Activated CD4-positive, alpha-beta memory T cell treated with anti-CD3 and anti-CD28 coated beads for 36 hours (primary cell): ENCODE measurements at regions of chr14 and their contacts with region 1.

Region 1: DNA sequence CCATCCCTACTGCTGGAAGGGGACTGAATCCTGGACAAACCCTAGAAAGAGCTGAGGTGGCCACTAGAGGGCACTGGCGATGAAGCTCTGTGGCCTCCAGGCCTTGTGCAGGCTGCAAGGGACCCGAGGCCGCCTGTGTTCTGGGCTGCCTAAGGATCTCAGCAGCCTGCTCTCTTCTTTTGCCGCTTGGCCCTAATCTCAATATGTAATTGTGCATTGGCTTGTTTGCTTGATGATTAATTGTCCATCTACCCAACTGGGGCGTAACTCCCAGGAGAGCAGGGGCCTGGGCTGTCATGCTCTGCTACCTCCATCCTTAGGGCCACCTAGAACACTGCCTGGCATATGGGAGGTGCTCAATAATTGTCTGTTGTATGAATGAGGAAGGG is 73.8 kb downstream of the SYNE3 start:
- DNase-seq: peak; percentile 83
- H3K4me3 Mint-ChIP-seq: no peak overlapping the region
- H3K27ac Mint-ChIP-seq: peak overlapping the region; percentile 35
- H3K4me1 Mint-ChIP-seq: peaks cover 10% of the 10 kb centered on the region
- H3K27me3 Mint-ChIP-seq: no peaks in the 10 kb centered on the region

Region 2: GRCh38 chr14:95460647-95461478 is 18.2 kb after region 1 on chr14:
- CTCF ChIA-PET with region 1: interaction called, 20 read pairs
- POLR2A ChIA-PET with region 1: no interaction called
- intact Hi-C with region 1: no loop called
- DNase-seq: no peak
- H3K4me3 Mint-ChIP-seq: no peak overlapping the region
- H3K27ac Mint-ChIP-seq: peak overlapping the region; percentile 44
- H3K4me1 Mint-ChIP-seq: peaks cover 53% of the 10 kb centered on the region
- H3K27me3 Mint-ChIP-seq: no peaks in the 10 kb centered on the region

Region 3: GRCh38 chr14:95507701-95508103 is 65.1 kb after region 1 on chr14:
- CTCF ChIA-PET with region 1: interaction called, 17 read pairs
- POLR2A ChIA-PET with region 1: no interaction called
- intact Hi-C with region 1: no loop called
- DNase-seq: peak; percentile 50
- H3K4me3 Mint-ChIP-seq: no peak overlapping the region
- H3K27ac Mint-ChIP-seq: peak overlapping the region; percentile 8
- H3K4me1 Mint-ChIP-seq: peaks cover 78% of the 10 kb centered on the region
- H3K27me3 Mint-ChIP-seq: no peaks in the 10 kb centered on the region

Region 4: GRCh38 chr14:95534299-95535225 is 91.9 kb after region 1 on chr14 and contains the start of gene GLRX5:
- CTCF ChIA-PET with region 1: interaction called, 202 read pairs
- POLR2A ChIA-PET with region 1: interaction called, 4 read pairs
- intact Hi-C with region 1: loop called (anchors 2 kb)
- DNase-seq: peak; percentile 98
- H3K4me3 Mint-ChIP-seq: peak within 1 kb of the TSS; percentile 93
- H3K27ac Mint-ChIP-seq: peak within 1 kb of the TSS; percentile 93
- H3K4me1 Mint-ChIP-seq: peaks cover 52% of the 10 kb centered on the region
- H3K27me3 Mint-ChIP-seq: no peaks in the 10 kb centered on the region
- total RNA-seq, gene GLRX5: 31.8 to 32.2 TPM

Region 5: GRCh38 chr14:95699412-95699811 is 256.8 kb after region 1 on chr14:
- CTCF ChIA-PET with region 1: no interaction called
- POLR2A ChIA-PET with region 1: no interaction called
- intact Hi-C with region 1: no loop called
- DNase-seq: no peak
- H3K4me3 Mint-ChIP-seq: no peak overlapping the region
- H3K27ac Mint-ChIP-seq: no peak overlapping the region
- H3K4me1 Mint-ChIP-seq: no peaks in the 10 kb centered on the region
- H3K27me3 Mint-ChIP-seq: peaks cover 31% of the 10 kb centered on the region